Posterior vena cava (tissue), 2 donors: ENCODE measurements at regions of chr2 and their contacts with region 1.

Region 1: DNA sequence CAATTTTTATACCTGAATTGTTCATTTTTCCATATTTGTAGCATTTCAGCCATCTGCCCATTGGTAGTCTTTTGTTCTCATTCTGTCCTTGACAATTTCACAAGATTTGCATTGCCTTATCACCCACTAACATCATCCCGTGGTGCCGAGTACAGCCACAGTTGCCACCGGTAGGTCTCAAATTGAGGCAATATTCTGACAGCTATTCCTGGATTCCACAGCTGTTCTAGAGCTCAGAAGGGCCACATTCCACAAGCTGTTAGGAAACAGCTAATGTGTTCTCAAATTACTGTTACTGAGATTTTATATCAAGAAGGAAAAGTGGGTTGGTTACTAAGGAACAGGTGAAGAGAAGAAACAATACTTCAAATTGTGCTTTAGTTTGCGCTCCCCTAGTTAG is 178.8 kb downstream of the RPRM start:
- DNase-seq: no peak

Region 2: DNA sequence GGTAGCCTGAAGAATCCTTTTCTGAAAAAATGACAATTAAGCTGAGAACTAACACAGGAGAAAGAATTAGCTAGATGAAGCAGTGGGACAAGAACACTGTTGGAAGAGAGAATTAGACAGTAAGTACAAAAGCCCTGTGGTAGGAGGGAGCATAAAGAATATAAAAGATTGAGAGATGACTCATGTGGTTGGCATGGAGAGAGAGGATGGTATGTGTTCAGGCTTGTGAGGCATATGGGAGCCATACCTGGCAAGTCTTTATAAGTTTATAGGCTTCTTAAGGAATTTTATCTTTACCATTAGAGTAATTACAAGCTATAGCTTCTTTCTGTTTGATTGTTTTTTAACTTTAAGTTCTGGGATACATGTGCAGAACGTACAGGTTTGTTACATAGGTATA is 256.4 kb before region 1 on chr2:
- intact Hi-C with region 1: loop called in 1 of 2 experiments (anchors 5 kb)
- DNase-seq: no peak